Activated T-helper 2 cell treated with anti-CD3 and anti-CD28 coated beads, Interferon-gamma antibody, Interleukin-2, Interleukin-4, amounts not matched to agents 10 μg/mL and 5 μg/mL and 100 μg/mL, durations not matched to agents 14 hours and 24 hours and 36 hours (primary cell): ENCODE measurements at regions of chr1 and their contacts with region 1.

Region 1: DNA sequence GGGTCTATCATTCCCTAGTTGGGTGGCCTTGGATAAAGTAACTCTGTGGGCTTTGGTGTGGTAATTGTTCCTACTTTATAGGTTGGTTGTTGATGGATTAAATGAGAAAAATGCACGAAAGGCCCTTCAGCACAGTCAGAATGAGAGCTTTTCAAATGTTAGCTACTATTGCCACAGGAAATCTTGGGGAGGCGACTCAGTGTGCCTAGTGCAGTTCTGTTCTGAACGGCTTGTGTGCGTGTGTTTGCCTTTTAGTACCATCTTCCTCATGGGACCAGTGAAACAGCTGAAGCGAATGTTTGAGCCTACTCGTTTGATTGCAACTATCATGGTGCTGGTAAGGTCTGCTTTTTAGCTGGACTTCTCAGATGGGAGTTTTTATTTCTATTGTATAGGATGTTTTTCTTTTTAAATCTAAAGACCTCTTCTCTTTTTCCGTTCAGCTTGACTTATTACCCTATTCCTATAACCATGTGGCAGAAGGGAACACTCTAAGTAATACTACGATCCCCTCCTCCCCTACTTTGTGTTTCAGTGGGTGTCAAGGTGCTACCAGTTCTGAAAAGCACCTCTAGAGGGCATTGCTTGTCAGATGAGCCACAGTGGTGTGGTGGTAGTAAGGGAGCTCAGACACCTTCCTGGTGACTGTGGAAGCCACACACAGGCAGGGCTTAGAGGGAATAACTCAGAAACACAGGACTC is 9.2 kb downstream of the SFT2D2 start:
- DNase-seq: peak; percentile 51
- H3K4me3 Mint-ChIP-seq: peak overlapping the region; percentile 53
- H3K27ac Mint-ChIP-seq: peak overlapping the region; percentile 94
- H3K4me1 Mint-ChIP-seq: peaks cover 70% of the 10 kb centered on the region
- H3K27me3 Mint-ChIP-seq: no peaks in the 10 kb centered on the region

Region 2: DNA sequence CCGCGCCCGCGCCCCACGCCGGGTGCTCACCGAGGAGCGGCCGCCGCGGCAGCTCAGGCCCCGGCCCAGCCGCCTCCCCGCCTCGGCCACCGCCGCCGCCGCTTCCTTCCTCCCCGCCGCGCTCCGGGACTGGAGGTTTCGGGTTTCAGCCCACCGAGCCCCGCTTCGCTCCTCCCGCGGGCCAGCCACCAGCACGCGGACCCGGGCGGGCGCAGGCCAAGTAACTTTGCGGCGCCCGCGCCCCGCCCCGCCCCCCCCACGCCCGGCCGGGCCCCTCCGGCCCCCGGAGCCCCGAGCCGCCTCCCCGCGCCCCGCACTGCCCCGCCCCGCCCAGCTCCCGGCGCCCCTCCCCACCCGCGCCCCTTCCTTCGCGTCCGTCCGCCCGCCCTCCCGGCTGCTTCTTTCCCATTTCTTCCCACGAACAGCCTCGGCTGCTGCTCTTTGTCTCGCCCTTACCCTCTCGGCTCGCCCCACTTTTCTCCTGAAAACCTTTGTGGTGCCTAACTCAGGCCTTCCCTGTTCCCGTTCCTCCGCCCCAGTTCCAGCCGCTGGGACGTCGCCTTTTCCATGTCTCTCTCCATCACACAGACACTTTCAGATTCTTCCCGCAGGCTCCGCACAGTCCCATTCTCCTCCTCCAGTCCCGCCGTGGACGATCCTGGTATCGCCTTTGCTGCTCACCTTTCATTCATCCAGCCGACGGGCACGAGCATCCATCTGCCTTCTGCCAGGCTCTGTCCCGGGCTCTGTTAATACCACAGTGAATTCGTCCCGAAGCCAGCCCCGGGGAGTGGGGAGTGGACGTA is 98.1 kb before region 1 on chr1 and contains the start of gene GPR161:
- intact Hi-C with region 1: loop called (anchors 5 kb)
- DNase-seq: peak; percentile 29
- H3K4me3 Mint-ChIP-seq: peak within 1 kb of the TSS; percentile 85
- H3K27ac Mint-ChIP-seq: peak within 1 kb of the TSS; percentile 33
- H3K4me1 Mint-ChIP-seq: peaks cover 16% of the 10 kb centered on the region
- H3K27me3 Mint-ChIP-seq: peaks cover 48% of the 10 kb centered on the region
- total RNA-seq, gene GPR161: 1.3 and 2.4 TPM in 2 replicates

Region 3: DNA sequence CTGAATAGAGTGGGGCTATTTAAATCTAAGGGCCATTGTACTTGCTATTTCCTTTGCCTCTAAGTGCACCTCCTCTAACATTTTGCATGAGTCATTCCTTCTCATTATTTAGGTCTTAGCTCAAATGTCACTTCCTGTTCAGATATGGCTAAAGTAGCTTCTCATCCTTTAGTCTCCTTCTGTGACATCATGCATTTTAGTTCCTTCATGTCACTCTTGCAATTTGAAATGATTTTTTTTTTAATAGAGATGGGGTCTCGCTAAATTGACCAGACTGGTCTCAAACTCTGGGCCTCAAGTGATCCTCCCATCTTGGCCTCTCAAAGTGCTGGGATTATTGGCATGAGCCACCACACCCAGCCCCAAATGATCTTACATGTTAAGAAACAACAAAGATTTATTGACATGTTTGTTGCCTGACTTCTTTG is 52.3 kb after region 1 on chr1:
- intact Hi-C with region 1: loop called (anchors 5 kb)
- DNase-seq: no peak
- H3K4me3 Mint-ChIP-seq: no peak overlapping the region
- H3K27ac Mint-ChIP-seq: peak overlapping the region; percentile 43
- H3K4me1 Mint-ChIP-seq: peaks cover 27% of the 10 kb centered on the region
- H3K27me3 Mint-ChIP-seq: no peaks in the 10 kb centered on the region

Region 4: DNA sequence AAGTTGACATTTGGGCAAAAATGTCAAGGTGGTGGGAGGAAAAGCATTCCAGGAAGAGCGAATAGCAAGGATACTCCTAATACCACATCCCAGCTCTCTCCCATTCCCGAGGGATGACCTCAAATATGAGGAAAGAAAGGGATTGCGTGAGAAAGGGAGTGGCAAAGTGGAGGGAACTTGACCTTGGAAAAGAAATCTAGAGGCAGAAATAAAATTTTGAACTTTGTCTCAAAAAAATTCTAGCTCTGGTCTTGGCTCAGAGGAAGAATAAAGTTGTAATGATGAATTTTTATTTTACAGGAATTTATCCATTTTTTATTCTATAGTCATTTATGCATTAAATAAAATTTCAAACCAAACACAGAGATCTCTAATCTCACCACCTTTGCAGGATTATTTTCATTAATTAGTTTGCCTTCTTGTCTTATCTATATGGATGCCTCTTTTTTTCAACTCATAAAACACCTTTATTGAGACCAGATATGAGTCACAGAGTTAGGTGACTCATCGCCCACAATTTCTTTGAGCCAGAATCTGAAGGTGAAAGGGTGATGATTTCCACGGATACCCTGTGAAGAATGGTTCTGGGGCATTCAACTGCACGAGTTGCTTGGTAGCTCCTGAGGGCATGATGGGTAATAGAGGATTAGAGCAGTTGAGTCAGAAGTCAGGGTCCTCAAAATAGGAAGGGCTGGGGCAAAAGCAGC is 173.7 kb after region 1 on chr1:
- intact Hi-C with region 1: loop called (anchors 5 kb)
- DNase-seq: peak; percentile 64
- H3K4me3 Mint-ChIP-seq: peak overlapping the region; percentile 40
- H3K27ac Mint-ChIP-seq: peak overlapping the region; percentile 90
- H3K4me1 Mint-ChIP-seq: peaks cover 48% of the 10 kb centered on the region
- H3K27me3 Mint-ChIP-seq: no peaks in the 10 kb centered on the region

Region 5: GRCh38 chr1:168430321-168430720 is 195.3 kb after region 1 on chr1:
- intact Hi-C with region 1: no loop called
- DNase-seq: no peak
- H3K4me3 Mint-ChIP-seq: no peak overlapping the region
- H3K27ac Mint-ChIP-seq: no peak overlapping the region
- H3K4me1 Mint-ChIP-seq: peaks cover 10% of the 10 kb centered on the region
- H3K27me3 Mint-ChIP-seq: no peaks in the 10 kb centered on the region

Region 6: GRCh38 chr1:169491845-169492281 is 1256.9 kb after region 1 on chr1:
- intact Hi-C with region 1: loop called (anchors 10 kb)
- DNase-seq: no peak
- H3K4me3 Mint-ChIP-seq: no peak overlapping the region
- H3K27ac Mint-ChIP-seq: peak overlapping the region; percentile 38
- H3K4me1 Mint-ChIP-seq: peaks cover 48% of the 10 kb centered on the region
- H3K27me3 Mint-ChIP-seq: no peaks in the 10 kb centered on the region